Activated naive CD4-positive, alpha-beta T cell treated with anti-CD3 and anti-CD28 coated beads for 36 hours (primary cell): ENCODE measurements at regions of chr4 and their contacts with region 1.

Region 1: GRCh38 chr4:3898098-3898497 is 131.9 kb downstream of the ADRA2C start:
- DNase-seq: no peak
- H3K4me3 Mint-ChIP-seq: no peak overlapping the region
- H3K27ac Mint-ChIP-seq: no peak overlapping the region
- H3K4me1 Mint-ChIP-seq: no peaks in the 10 kb centered on the region
- H3K27me3 Mint-ChIP-seq: peaks cover 4% of the 10 kb centered on the region

Region 2: GRCh38 chr4:3836756-3837601 is 61.1 kb before region 1 on chr4:
- CTCF ChIA-PET with region 1: no interaction called
- intact Hi-C with region 1: no loop called
- DNase-seq: peak; percentile 24
- H3K4me3 Mint-ChIP-seq: no peak overlapping the region
- H3K27ac Mint-ChIP-seq: no peak overlapping the region
- H3K4me1 Mint-ChIP-seq: no peaks in the 10 kb centered on the region
- H3K27me3 Mint-ChIP-seq: peaks cover 24% of the 10 kb centered on the region

Region 3: GRCh38 chr4:3936184-3936583 is 38.1 kb after region 1 on chr4:
- CTCF ChIA-PET with region 1: interaction called, 4 read pairs
- intact Hi-C with region 1: loop called (anchors 5 kb)
- DNase-seq: no peak
- H3K4me3 Mint-ChIP-seq: no peak overlapping the region
- H3K27ac Mint-ChIP-seq: no peak overlapping the region
- H3K4me1 Mint-ChIP-seq: no peaks in the 10 kb centered on the region
- H3K27me3 Mint-ChIP-seq: no peaks in the 10 kb centered on the region